ENCODE measurements at regions of chr1 and their contacts with region 1.

Region 1: DNA sequence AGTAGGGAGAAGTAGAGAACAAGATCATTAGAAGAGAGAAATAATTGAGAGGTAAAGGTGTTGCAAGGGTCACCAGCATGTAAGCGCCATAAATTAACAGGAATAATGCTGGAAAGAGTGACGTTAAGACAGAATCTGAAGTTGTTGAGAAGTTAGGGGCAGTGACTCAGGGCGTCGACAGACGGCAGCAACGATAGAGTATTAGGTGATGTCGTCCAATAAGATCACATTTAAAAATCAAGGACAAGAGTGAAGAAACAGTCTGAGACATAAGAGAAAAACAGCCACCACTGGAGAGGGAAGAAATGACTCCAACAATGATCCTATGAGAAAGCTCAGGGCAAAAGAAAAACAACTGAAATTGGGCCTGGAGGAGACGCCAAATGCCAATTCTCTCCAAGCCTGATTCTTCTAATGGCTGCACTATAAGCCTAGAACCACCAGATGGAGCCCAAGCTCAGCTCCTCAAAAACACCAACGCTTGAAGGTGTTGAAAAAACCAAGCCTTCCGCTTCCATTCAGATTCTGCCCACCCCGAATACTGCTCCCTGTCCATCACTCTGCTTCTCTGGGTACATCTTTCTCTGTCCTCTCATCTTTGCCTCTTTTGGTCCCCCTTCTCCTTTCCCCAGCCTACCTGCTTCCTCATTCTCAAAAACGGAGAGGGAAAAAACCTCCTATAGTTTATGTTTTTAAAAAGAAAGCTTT is 70.0 kb downstream of the LUZP1 start:
- DNase-seq: peak; percentile 78
- H3K4me3 ChIP-seq: no peak overlapping the region
- H3K27ac ChIP-seq: peak overlapping the region; percentile 83
- H3K4me1 ChIP-seq: peaks cover 53% of the 10 kb centered on the region
- H3K27me3 ChIP-seq: no peaks in the 10 kb centered on the region
- CTCF ChIP-seq: peak; percentile 90 to 93
- POLR2A ChIP-seq: no peak

Region 2: GRCh38 chr1:23114424-23115079 is 15.9 kb after region 1 on chr1:
- CTCF ChIA-PET with region 1: interaction called, 15 read pairs
- POLR2A ChIA-PET with region 1: interaction called, 3 read pairs
- dilution Hi-C with region 1: no loop called
- intact Hi-C with region 1: no loop called
- DNase-seq: peak; percentile 48
- H3K4me3 ChIP-seq: no peak overlapping the region
- H3K27ac ChIP-seq: peak overlapping the region; percentile 60
- H3K4me1 ChIP-seq: peaks cover 37% of the 10 kb centered on the region
- H3K27me3 ChIP-seq: no peaks in the 10 kb centered on the region
- CTCF ChIP-seq: no peak
- POLR2A ChIP-seq: no peak

Region 3: DNA sequence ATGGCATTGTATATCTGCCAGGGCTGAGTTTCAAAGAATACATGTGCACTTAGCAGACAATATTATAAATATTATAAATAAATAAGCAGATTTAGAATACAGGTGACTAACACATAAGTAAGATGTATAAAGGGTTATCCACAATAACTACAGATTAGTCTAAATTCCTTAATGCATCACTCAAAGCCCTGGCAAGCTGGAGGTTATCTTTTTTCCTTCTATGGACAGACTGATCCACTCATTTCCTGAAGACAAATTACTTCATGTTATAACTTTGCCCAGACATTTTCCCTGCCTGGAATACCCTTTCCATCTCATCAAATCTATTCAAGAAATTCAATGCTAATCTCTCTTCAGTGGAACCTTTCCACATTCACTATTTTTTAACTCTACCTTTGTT is 31.2 kb after region 1 on chr1:
- CTCF ChIA-PET with region 1: interaction called, 27 read pairs
- POLR2A ChIA-PET with region 1: interaction called, 3 read pairs
- dilution Hi-C with region 1: no loop called
- intact Hi-C with region 1: loop called (anchors 1 kb)
- DNase-seq: peak; percentile 78
- H3K4me3 ChIP-seq: no peak overlapping the region
- H3K27ac ChIP-seq: peak overlapping the region; percentile 76
- H3K4me1 ChIP-seq: peaks cover 67% of the 10 kb centered on the region
- H3K27me3 ChIP-seq: no peaks in the 10 kb centered on the region
- CTCF ChIP-seq: no peak
- POLR2A ChIP-seq: peak; percentile 40

Region 4: GRCh38 chr1:23168457-23169194 is 70.0 kb after region 1 on chr1 and contains the start of gene LUZP1:
- CTCF ChIA-PET with region 1: interaction called, 84 read pairs
- POLR2A ChIA-PET with region 1: interaction called, 10 read pairs
- dilution Hi-C with region 1: no loop called
- intact Hi-C with region 1: loop called (anchors 1 kb)
- DNase-seq: peak; percentile 93
- H3K4me3 ChIP-seq: peak within 1 kb of the TSS; percentile 84 to 95 (median 93)
- H3K27ac ChIP-seq: peak within 1 kb of the TSS; percentile 77
- H3K4me1 ChIP-seq: peaks cover 32% of the 10 kb centered on the region
- H3K27me3 ChIP-seq: no peaks in the 10 kb centered on the region
- CTCF ChIP-seq: peak in 1 of 2 donors; percentile 7
- POLR2A ChIP-seq: peak; percentile 88
- total RNA-seq, gene LUZP1: 82.4 and 92.3 TPM in 2 replicates

Region 5: GRCh38 chr1:23278717-23279116 is 180.1 kb after region 1 on chr1:
- CTCF ChIA-PET with region 1: interaction called, 3 read pairs
- POLR2A ChIA-PET with region 1: no interaction called
- dilution Hi-C with region 1: no loop called
- intact Hi-C with region 1: loop called (anchors 2 kb)
- DNase-seq: no peak
- H3K4me3 ChIP-seq: no peak overlapping the region
- H3K27ac ChIP-seq: no peak overlapping the region
- H3K4me1 ChIP-seq: peaks cover 16% of the 10 kb centered on the region
- H3K27me3 ChIP-seq: no peaks in the 10 kb centered on the region
- CTCF ChIP-seq: no peak
- POLR2A ChIP-seq: peak; percentile 21

Measured in endothelial cell of umbilical vein (primary cell).